ENCODE measurements at regions of chr10 and their contacts with region 1.

Region 1: DNA sequence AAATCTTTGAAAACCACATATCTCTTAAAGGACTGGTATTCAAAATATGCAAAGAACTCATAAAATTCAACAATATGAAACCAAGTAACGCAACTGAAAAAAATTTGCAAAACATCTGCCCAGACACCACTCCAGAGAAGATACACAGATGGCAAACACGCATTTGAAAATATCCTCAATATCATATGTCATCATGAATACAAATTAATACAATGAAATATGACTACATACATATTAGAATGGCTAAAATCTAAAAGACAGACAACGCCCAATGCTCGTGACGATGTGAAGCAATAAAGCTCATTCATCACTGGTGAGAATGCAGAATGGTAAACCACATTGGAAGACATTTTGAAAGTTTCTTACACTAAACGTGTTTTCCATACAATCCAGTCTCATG is 770.1 kb upstream of the CELF2 start:
- DNase-seq: no peak
- H3K4me3 ChIP-seq: no peak overlapping the region
- H3K27ac ChIP-seq: no peak overlapping the region
- H3K4me1 ChIP-seq: no peaks in the 10 kb centered on the region
- H3K27me3 ChIP-seq: no peaks in the 10 kb centered on the region
- CTCF ChIP-seq: no peak
- POLR2A ChIP-seq: no peak

Region 2: DNA sequence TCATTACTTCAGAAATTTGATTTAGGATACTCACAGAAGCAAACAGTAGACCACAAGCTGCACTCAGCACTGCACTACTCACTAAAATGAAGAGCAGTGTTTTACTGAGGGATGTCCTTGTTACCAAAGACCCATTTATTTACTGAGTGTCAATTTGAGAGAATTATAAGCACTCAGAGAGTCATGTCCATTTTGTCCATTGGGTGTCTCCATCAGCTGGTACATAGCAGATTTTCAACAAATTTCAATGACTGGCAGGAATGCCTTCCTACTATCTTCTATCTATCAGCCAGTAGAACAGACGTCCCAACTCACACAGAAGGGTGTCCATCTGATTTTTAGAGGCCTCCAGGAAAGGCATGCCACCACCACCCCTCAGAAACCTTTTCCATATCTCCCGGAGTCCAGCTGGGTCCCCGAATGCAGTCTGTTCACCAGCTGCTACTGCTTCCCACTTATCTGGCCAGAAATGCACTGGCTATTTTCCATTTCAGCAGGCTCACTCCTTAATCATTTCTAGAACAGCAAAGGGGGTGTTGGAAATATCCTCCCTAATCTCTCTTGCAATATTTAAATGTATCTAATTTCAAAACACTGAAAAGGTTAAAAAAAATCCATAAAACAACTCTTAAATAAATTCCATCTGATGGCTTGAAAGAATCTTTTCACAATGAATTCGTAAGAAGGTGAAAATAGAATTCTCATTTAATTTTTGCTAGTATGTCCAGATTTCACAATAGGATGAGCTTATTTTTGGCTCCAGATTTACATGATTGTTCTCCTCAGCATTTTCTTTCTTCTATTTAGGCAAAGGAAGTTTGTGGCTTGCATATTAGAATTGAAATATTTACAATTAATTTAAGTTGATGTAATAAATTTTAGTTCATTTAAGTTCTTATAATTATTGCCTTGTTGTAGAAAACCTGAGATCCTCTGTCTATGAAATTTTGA is 393.9 kb before region 1 on chr10:
- intact Hi-C with region 1: loop called (anchors 10 kb)
- DNase-seq: no peak
- H3K4me3 ChIP-seq: no peak overlapping the region
- H3K27ac ChIP-seq: no peak overlapping the region
- H3K4me1 ChIP-seq: no peaks in the 10 kb centered on the region
- H3K27me3 ChIP-seq: no peaks in the 10 kb centered on the region
- CTCF ChIP-seq: no peak
- POLR2A ChIP-seq: no peak

Region 3: DNA sequence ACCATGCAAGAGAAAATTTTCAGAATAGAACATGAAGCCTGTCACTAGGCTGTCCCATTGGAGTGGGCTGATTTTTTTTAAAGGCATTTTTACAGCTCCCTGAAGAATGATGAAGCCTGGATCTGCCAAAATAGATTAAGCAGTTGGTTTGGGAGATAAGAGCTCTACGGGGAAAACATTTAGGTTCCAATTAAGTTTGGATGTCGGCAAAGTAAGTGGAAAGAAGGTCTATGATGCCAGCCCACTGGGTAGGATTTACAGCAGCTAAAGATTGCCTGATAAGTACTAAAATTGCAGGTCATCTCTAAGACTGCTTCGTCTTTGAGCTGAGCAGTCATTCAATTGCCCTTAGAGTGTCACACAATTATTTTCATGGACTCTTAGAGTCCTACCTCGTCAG is 169.1 kb before region 1 on chr10:
- intact Hi-C with region 1: loop called (anchors 5 kb)
- DNase-seq: no peak
- H3K4me3 ChIP-seq: no peak overlapping the region
- H3K27ac ChIP-seq: no peak overlapping the region
- H3K4me1 ChIP-seq: no peaks in the 10 kb centered on the region
- H3K27me3 ChIP-seq: no peaks in the 10 kb centered on the region
- CTCF ChIP-seq: no peak
- POLR2A ChIP-seq: no peak

Measured in breast epithelium (tissue), 4 donors.